Left cardiac atrium (tissue), 4 donors: ENCODE measurements at regions of chr11 and their contacts with region 1.

Region 1: DNA sequence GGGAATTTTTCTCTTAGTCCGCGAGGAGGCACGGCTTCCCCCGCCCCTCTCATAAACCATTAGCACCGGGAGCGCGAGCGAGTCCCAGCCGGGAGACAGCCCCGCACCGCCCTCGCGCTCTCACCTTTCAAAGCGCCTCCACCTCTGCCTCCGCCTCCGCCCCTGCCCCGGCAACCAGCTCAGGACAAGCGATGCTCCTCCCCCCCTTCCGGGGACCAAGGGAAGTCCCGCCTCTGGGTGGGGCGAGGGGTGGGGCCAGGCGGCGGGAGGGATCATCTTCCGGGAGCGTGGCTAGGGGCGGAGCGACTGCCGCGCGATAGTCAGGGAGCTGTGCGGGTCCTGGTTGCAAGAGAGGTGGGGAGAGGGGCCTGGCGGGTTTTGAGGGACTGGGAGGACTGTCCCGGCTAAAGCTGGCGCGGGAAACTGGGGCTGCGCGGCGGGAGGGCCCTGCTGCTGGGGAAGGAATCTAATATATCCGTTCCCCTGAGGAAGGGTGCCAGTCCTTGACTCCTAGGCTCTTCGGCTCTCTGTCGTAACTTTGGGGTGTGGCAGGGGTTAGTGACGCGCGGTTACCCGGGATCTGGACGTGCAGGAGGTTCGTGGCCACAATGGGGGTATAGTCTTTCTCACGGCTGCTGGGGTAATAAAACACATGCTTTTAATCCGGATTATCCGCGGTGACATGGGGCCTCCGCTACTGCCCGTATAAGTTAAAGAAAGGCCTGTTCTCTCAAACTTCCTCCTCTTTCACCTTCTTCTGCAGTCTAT is at the starts of genes CCDC82 and JRKL:
- DNase-seq: peak; percentile 96
- ATAC-seq: peak; percentile 100
- total RNA-seq, gene CCDC82: 17.4 to 18.0 TPM
- total RNA-seq, gene JRKL: 7.0 to 7.3 TPM

Region 2: DNA sequence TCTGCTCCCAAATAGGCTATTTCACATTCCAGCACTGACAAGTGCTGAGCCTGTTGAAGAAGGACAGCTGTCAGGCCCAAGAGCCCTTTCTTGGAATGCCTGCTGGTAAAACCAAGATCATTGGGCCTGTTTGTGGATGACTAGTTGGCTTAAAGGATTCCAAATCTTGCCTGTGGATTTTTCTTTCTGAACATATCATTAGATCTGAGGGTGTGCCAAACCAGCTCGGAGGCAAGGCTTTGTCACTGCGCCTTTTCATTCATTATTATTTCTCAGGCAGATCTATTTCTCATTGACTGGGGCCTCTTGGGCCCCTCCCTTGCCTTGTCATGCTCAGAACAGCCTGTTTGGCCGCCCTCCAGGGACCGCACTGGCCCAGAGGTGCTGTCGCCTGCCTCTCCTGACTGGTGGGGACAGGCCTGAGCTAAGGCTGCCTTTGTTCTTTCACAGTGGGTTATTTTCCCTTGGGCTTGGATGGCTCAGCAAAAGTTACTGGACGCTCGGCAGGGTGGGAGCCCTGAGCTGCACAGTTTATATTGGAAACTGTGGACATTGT is 936.2 kb before region 1 on chr11:
- intact Hi-C with region 1: no loop called
- DNase-seq: peak; percentile 73
- ATAC-seq: peak; percentile 79 to 80

Region 3: DNA sequence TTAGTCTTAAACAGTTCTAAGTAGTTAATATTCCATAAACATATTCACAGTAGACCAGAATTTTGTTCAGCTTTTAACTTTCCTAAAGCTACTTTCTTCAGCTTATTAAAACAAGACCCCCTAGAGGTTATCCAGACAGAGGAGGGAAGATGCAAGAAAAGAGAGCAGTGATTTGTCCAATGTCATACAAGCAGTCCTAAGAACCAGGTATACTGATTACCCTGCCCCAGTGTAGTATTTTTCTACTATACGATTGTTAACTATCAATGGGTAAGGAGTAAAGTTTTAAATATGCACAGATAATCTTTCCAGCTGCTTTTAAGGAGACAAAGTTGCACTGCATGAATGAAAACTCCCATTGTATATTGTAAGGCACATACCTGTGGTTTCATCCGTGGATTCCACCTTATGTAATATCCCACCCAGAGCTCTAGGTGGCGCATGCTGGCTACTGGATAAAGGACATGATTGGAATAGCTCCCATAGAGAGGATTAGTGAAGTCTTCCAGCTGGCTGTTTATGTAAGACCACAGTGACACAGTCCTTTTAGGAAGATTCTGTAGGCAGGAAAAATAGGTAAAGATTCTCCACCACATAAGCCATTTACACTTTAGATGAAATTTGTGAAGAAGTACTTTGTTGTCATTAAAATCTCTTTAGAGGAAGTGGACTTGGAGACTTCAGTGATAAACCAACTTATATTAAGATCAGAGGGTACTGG is 554.0 kb before region 1 on chr11:
- intact Hi-C with region 1: loop called in 1 of 2 experiments (anchors 5 kb)
- DNase-seq: peak; percentile 52
- ATAC-seq: peak; percentile 93 to 95

Region 4: GRCh38 chr11:96162816-96163499 is 226.9 kb before region 1 on chr11:
- intact Hi-C with region 1: no loop called
- DNase-seq: peak; percentile 42
- ATAC-seq: peak; percentile 87 to 90

Region 5: GRCh38 chr11:96342961-96343711 is 46.8 kb before region 1 on chr11 and contains the start of gene MAML2:
- intact Hi-C with region 1: no loop called
- DNase-seq: peak; percentile 94
- ATAC-seq: peak; percentile 91 to 94
- total RNA-seq, gene MAML2: 6.8 to 9.3 TPM

Region 6: DNA sequence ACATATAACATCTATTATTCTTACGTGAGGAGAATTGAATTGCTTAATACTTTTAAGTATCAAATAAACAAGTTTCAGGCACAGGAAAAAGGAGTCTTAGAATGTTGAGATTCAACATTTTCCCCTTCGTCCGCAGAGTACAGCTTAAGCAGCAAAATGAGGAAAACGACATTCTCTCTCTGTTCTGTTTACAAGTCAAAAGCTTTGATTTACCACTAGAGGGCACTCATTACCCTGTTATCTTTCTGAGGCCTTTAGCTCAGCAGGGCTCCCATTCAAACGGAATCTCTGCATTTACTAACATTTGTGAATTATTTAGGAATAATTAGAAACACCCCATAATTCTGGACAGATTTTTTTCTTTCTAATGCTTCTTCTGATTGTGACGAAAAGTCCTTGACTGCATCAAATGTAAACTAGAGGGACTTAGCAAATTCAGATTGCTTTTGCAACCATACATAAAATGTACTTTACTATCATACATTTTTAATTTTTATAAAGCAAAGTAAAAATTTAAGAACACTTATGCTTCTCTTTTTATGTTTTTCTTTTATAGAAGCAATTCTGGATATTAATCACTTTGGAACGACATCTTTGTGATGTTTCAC is 74.9 kb after region 1 on chr11:
- intact Hi-C with region 1: no loop called
- DNase-seq: no peak
- ATAC-seq: peak; percentile 94 to 95